Common myeloid progenitor, CD34-positive (primary cell): ENCODE measurements at regions of chr20 and their contacts with region 1.

Region 1: DNA sequence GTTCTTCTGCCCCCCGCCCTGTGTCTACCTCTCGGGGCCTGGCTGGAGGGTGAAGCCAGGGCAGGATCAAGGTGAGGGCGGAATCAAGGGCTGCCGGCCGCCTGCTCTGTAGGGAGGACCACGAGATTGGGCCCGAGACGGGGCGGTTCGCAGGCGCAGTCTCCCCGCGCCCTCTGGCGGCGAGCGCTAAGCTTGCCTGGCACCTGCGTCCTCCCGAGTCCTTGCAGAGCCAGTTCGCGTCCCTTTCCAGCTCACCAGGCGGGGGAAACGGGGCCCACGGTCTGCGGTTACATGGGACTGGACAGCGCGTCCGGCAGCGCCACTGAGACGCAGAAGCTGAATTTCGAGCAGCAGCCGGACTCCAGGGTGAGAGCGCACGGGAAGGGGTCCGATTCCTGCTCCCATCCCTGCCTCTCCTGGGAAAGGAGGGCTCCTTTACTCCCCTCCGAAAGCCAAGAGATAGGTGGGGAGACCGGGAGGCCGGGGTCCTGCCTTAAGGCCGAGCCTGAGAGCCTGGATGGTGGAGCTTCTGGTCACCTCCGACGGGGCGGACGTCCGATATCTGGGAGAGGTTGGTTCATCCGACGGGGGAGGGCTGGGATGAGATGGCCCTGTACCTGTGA is 3.6 kb upstream of the MATN4 start:
- DNase-seq: peak; percentile 58 to 69 (median 68)
- H3K4me3 ChIP-seq: no peak overlapping the region
- H3K27ac ChIP-seq: no peak overlapping the region
- H3K4me1 ChIP-seq: peaks cover 0 to 9% (median 5%) of the 10 kb centered on the region in 4 experiments
- H3K27me3 ChIP-seq: peaks cover 0 to 60% (median 13%) of the 10 kb centered on the region in 5 experiments

Region 2: GRCh38 chr20:45300961-45301360 is 10.7 kb before region 1 on chr20:
- CTCF ChIA-PET with region 1: interaction called, 11 read pairs
- POLR2A ChIA-PET with region 1: no interaction called
- DNase-seq: peak; percentile 52 to 70 (median 70)
- H3K4me3 ChIP-seq: no peak overlapping the region
- H3K27ac ChIP-seq: no peak overlapping the region
- H3K4me1 ChIP-seq: peaks cover 0 to 2% (median 0%) of the 10 kb centered on the region in 4 experiments
- H3K27me3 ChIP-seq: peaks cover 0 to 26% (median 15%) of the 10 kb centered on the region in 5 experiments